Common myeloid progenitor, CD34-positive (primary cell): ENCODE measurements at regions of chr1 and their contacts with region 1.

Region 1: GRCh38 chr1:23184212-23184934 is 15.7 kb upstream of the LUZP1 start:
- DNase-seq: peak in 2 of 3 donors; percentile 55 to 64
- H3K4me3 ChIP-seq: peak overlapping the region in 4 of 7 experiments; percentile 40 to 66 (median 52)
- H3K27ac ChIP-seq: no peak overlapping the region
- H3K4me1 ChIP-seq: peaks cover 0 to 7% (median 5%) of the 10 kb centered on the region in 4 experiments
- H3K27me3 ChIP-seq: no peaks in the 10 kb centered on the region

Region 2: DNA sequence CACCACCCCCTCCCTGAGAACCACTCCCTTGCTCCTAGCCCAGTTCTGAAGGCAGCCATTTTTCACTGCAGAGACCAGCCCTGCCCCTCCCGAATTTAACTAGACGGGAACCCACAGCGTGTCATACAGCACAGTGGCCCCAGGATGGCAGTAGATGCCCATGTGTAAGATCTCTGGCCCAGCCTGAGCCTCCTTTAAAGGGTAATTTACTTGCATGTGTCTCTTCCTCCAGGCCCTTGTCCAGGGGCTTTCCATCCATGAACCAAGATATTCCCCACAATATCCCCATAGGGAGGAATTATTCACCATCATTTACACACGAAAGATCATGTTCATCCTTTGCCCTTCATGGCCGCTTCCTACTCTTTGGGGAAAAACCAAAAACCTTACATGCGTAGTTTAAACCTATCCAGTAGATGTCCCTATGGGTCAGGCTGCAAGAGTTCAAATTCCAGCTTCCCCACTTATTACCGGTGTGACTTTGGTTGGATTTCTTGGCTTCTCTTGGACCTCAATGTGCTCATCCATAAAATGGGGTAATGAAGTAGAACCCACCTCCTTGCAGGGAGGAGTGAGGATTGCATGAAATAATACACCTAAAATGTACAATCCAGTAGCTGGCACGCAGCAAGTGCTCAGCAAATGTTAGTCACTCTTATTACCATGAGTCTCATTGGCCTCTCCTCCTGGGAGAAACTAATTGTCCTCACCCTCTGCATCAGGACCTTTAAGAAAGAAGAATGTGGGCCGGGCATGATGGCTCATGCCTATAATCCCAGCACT is 207.7 kb before region 1 on chr1:
- CTCF ChIA-PET with region 1: interaction called, 16 read pairs
- POLR2A ChIA-PET with region 1: no interaction called
- DNase-seq: peak; percentile 77 to 88 (median 86)
- H3K4me3 ChIP-seq: no peak overlapping the region
- H3K27ac ChIP-seq: no peak overlapping the region
- H3K4me1 ChIP-seq: peaks cover 0 to 3% (median 0%) of the 10 kb centered on the region in 4 experiments
- H3K27me3 ChIP-seq: peaks cover 0 to 8% (median 7%) of the 10 kb centered on the region in 5 experiments

Region 3: GRCh38 chr1:23108918-23109533 is 75.3 kb before region 1 on chr1:
- CTCF ChIA-PET with region 1: interaction called, 478 read pairs
- POLR2A ChIA-PET with region 1: no interaction called
- DNase-seq: no peak
- H3K4me3 ChIP-seq: no peak overlapping the region
- H3K27ac ChIP-seq: no peak overlapping the region
- H3K4me1 ChIP-seq: peaks cover 2 to 20% (median 13%) of the 10 kb centered on the region in 4 experiments
- H3K27me3 ChIP-seq: no peaks in the 10 kb centered on the region

Region 4: DNA sequence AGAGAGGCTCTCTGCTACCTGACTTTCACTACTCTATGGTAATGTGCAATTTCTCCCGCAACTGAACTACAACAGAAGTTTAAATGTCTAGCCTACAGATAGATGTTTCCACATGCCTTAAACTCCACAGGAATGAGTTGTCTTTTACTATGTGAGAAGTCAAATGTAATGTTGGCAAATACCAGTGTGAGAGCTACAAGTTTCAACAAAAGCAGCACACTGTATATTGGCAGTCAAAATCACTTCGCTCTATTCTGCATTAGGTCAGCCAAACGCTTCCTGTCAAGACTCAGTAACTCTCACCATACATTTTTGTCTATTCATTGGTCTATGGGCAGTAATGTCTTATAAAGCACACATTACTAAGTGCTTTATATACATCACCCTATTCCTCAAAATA is 57.6 kb before region 1 on chr1:
- CTCF ChIA-PET with region 1: interaction called, 24 read pairs
- POLR2A ChIA-PET with region 1: interaction called, 4 read pairs
- DNase-seq: no peak
- H3K4me3 ChIP-seq: no peak overlapping the region
- H3K27ac ChIP-seq: no peak overlapping the region
- H3K4me1 ChIP-seq: peaks cover 0 to 10% (median 7%) of the 10 kb centered on the region in 4 experiments
- H3K27me3 ChIP-seq: no peaks in the 10 kb centered on the region

Region 5: GRCh38 chr1:23168457-23169194 is 15.7 kb before region 1 on chr1 and contains the start of gene LUZP1:
- CTCF ChIA-PET with region 1: interaction called, 60 read pairs
- POLR2A ChIA-PET with region 1: interaction called, 3 read pairs
- DNase-seq: peak; percentile 79 to 83 (median 81)
- H3K4me3 ChIP-seq: peak within 1 kb of the TSS; percentile 73 to 93 (median 80)
- H3K27ac ChIP-seq: peak within 1 kb of the TSS; percentile 34 to 83
- H3K4me1 ChIP-seq: peaks cover 6 to 38% (median 29%) of the 10 kb centered on the region in 4 experiments
- H3K27me3 ChIP-seq: no peaks in the 10 kb centered on the region